Dendritic cell treated with granulocyte-macrophage colony-stimulating factor and Interleukin-4, amounts not matched to agents 40 ng/mL and 50 ng/mL, for 4 days (primary cell): ENCODE measurements at regions of chr22 and their contacts with region 1.

Region 1: GRCh38 chr22:22235558-22235957 is 9.0 kb upstream of the VPREB1 start:
- H3K4me3 Mint-ChIP-seq: no peak overlapping the region
- H3K27ac Mint-ChIP-seq: no peak overlapping the region
- H3K4me1 Mint-ChIP-seq: no peaks in the 10 kb centered on the region
- H3K27me3 Mint-ChIP-seq: no peaks in the 10 kb centered on the region

Region 2: DNA sequence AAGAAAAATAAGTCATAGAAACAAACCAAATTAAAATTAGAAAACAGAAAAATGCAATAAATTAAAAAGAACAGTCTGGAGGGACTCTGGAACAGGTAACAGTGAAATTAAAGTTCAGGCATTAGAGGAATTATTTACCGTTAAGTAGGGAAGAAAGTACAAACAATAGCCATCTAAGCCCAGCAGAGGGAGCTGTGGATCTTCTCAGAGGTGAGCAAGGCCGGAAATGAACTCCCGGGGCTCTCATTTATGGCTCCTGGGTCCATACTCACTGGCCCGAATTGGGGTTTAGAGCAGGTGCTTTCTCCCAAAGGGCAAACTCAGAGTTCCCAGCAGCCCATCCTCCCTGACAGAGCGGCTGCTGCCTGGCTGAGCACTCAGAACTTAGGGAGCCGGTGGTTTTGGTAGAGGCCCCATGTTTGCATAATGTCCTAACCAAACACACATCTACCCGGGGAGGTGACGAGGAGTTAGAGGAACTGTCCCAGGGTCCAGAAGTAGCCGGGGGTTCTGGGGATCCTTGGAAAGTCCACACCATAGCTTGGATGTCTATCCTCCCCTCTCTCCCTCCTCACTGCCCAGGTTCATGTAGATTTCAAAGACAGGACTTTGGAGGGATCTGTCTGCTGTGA is 78.7 kb before region 1 on chr22:
- intact Hi-C with region 1: loop called (anchors 5 kb)
- H3K4me3 Mint-ChIP-seq: no peak overlapping the region
- H3K27ac Mint-ChIP-seq: peak overlapping the region; percentile 69
- H3K4me1 Mint-ChIP-seq: peaks cover 42% of the 10 kb centered on the region
- H3K27me3 Mint-ChIP-seq: no peaks in the 10 kb centered on the region

Region 3: DNA sequence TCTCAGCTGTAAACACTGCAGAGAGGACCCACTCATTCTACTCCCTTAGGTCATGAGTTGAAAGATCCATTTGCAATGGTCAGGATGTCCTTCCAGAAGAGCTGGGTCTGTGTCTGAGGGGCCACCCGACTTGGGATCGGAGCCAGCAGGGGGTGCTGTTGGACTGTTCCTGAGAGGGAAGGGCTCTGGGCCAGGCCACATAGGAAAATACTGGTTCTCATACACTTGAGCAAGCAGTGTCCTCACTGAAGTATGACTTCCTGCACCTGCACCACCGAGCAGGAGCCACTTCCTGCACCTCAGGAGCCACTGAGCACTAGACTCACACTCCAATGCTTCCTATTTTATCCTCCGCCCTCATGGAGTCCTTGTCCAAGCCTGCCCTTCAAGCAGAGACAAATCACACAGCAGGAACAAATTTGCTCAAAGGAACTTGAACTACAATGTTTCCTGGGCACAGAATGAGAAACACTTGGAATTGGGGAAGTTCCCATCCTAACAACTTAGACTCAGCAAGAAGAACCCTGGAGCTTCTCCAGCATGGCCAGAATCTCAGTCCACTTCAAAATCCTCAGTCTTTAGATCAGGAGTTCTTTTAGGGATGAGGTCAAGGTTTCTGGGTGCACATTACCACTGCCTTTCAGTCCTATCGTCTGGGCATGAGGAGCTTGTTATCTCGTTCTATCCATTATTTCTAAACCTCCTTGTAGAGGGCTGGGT is 27.6 kb before region 1 on chr22:
- intact Hi-C with region 1: loop called (anchors 2 kb)
- H3K4me3 Mint-ChIP-seq: no peak overlapping the region
- H3K27ac Mint-ChIP-seq: no peak overlapping the region
- H3K4me1 Mint-ChIP-seq: no peaks in the 10 kb centered on the region
- H3K27me3 Mint-ChIP-seq: peaks cover 45% of the 10 kb centered on the region

Region 4: DNA sequence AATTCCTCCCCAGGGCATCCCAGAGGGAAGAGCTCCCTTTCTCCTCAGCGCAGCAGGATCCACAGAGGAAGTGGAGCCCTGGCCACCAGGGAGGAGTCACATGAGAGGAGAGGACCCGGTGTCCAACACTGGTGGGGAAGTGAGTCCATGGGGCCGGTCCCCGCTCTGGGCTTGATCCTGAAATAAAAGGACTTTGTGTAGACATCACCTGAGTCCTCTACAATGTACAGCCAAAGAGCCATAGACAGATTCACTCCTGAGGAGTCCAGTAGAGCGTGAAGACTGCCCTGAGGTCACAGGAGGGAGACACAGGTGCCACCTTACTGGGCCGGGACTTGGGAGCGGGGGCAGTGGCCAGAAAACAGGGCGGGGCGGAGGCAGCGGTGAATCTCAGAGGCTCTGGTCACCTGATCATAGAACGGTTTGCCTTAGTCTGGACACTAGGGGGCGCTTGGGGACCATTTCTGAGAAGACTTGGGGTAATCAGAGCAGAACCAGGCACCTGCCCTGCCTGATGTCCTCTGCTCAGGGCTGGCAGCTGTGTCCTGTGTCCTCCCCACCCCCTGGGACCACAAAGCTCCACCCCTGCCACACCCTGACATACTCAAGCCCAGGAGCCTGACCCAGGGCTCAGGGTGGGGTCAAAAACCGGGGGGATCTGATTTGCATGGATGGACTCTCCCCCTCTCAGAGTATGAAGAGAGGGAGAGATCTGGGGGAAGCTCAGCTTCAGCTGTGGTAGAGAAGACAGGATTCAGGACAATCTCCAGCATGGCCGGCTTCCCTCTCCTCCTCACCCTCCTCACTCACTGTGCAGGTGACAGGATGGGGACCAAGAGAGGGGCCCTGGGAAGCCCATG is 121.7 kb after region 1 on chr22:
- intact Hi-C with region 1: no loop called
- H3K4me3 Mint-ChIP-seq: no peak overlapping the region
- H3K27ac Mint-ChIP-seq: no peak overlapping the region
- H3K4me1 Mint-ChIP-seq: peaks cover 9% of the 10 kb centered on the region
- H3K27me3 Mint-ChIP-seq: peaks cover 35% of the 10 kb centered on the region